ENCODE measurements at regions of chr21 and their contacts with region 1.

Region 1: GRCh38 chr21:38805328-38806152 is at the start of gene ETS2:
- DNase-seq: peak; percentile 90 to 91
- H3K4me3 ChIP-seq: peak within 1 kb of the TSS; percentile 84 to 98 (median 86)
- H3K27ac ChIP-seq: peak within 1 kb of the TSS; percentile 69 to 99 (median 97)
- H3K4me1 ChIP-seq: peaks cover 13 to 30% of the 10 kb centered on the region in 2 donors
- H3K27me3 ChIP-seq: no peaks in the 10 kb centered on the region
- CTCF ChIP-seq: no peak
- POLR2A ChIP-seq: peak; percentile 83 to 97
- total RNA-seq, gene ETS2: 36.6 to 92.2 (median 56.3) TPM

Region 2: GRCh38 chr21:38733973-38734546 is 71.5 kb before region 1 on chr21:
- intact Hi-C with region 1: loop called (anchors 5 kb)
- DNase-seq: peak; percentile 86 to 88
- H3K4me3 ChIP-seq: peak overlapping the region in 1 of 3 donors; percentile 0
- H3K27ac ChIP-seq: peak overlapping the region in 2 of 3 donors; percentile 24 to 44
- H3K4me1 ChIP-seq: peaks cover 0 to 7% of the 10 kb centered on the region in 2 donors
- H3K27me3 ChIP-seq: no peaks in the 10 kb centered on the region
- CTCF ChIP-seq: peak; percentile 84 to 97 (median 93)
- POLR2A ChIP-seq: no peak

Region 3: DNA sequence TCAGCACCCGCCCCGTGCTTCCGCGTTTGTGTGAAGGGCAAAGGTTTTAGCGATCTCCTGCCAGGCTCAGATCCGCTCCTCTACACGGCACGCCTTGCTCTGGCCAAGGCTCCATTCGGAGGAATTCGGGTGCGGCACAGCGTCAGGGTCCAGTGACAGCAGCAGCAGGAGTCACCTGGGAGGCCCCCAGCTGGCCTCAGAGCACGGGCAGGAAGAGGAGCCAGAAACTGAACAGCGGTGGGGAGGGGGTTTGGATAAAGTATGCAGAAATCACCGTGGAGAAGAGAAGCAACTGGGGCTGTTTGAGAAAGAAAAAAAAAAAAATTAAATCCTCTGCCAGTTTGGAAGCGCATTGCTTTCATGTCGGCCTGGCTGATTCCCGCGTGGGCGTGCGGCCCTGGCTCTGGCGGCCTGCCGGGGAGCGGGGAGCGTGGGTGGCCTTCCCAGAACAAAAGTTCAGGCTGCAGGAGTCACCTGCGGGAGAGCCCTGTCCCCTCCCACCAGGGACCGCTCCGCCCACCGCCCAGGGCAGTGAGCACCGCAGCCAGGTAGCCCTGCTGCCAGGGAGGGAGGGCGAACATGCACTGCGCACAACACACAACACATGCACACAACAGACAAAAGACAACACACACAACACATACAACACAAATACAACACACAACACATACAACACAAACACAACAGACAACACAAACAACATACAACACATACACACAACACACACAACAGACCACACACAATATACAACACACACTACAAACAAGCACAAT is 107.8 kb after region 1 on chr21:
- intact Hi-C with region 1: no loop called
- DNase-seq: peak; percentile 96
- H3K4me3 ChIP-seq: no peak overlapping the region
- H3K27ac ChIP-seq: peak overlapping the region; percentile 90 to 98 (median 94)
- H3K4me1 ChIP-seq: peaks cover 29 to 67% of the 10 kb centered on the region in 2 donors
- H3K27me3 ChIP-seq: no peaks in the 10 kb centered on the region
- CTCF ChIP-seq: no peak
- POLR2A ChIP-seq: peak in 1 of 2 donors; percentile 66

Region 4: GRCh38 chr21:38925923-38926322 is 120.4 kb after region 1 on chr21:
- intact Hi-C with region 1: loop called (anchors 10 kb)
- DNase-seq: no peak
- H3K4me3 ChIP-seq: no peak overlapping the region
- H3K27ac ChIP-seq: peak overlapping the region in 2 of 3 donors; percentile 6 to 7
- H3K4me1 ChIP-seq: peaks cover 0 to 27% of the 10 kb centered on the region in 2 donors
- H3K27me3 ChIP-seq: no peaks in the 10 kb centered on the region
- CTCF ChIP-seq: no peak
- POLR2A ChIP-seq: no peak

Region 5: DNA sequence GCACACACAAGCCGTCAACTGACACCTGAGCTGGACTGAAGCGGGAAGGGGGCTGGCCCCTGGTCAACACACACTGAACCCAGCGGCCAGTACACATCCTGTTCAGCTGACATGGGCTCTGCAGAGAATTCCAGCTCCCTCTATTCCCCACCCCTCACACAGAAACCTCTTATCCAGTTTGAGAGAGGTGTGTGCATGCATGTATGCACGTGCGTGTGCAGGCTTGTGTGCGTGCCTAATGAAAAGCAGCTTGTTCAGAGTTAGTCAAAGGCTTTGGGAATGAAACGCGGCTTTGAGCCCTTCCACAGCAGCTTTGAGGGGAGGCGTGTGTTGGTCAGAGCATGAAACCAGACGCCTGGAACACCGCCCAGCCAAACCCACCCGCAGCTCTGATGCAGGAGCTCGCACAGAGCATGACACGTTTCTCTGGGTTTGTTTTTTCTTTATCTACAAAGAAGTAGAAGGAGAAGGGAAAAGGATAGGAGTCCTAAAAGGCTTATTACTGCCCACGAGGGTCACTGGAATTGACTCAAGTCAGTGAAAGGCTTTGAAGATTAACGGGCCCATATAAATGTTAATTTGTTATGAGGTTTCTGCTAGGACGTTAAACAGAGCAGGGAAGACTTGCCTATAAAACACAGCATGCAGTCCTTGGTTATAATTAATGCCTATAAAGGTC is 184.3 kb after region 1 on chr21:
- intact Hi-C with region 1: loop called (anchors 10 kb)
- DNase-seq: peak; percentile 54 to 63
- H3K4me3 ChIP-seq: no peak overlapping the region
- H3K27ac ChIP-seq: peak overlapping the region; percentile 22 to 60 (median 35)
- H3K4me1 ChIP-seq: peaks cover 60 to 84% of the 10 kb centered on the region in 2 donors
- H3K27me3 ChIP-seq: no peaks in the 10 kb centered on the region
- CTCF ChIP-seq: no peak
- POLR2A ChIP-seq: no peak

Region 6: DNA sequence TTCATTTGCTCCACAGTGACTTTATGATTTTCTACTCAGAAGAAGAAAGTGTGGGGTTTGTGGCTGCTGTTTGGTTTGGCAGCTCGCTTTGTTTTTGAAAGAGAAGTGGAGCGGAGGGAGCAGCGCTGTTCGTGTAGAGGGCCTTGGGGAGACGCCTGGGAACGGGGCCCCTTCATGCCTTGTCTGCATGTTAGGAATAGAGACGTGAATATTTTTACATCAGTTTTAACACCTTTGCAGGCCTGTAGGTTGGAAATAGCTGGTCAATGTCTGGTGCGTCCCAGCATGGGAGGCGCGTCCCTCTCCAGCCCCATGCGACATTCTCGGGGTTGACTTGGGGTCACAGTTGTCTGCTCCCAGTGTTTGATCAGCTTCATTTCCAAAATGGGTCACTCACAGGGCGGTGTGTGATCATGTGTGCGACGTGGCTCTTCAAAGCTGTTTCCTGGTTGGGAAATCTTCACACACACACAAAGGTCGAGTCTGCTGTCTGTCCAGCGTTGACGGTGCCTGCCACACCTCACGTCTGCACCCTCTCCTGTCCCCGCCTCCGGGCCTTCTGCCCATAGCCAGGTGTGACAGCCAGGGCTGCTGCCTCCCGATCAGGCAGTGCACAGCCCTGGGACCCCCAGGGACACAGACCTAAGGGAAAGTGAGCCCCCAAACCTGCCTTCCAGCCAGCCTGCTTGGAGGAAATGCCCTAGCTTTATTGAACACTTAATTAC is 228.5 kb after region 1 on chr21:
- intact Hi-C with region 1: loop called (anchors 10 kb)
- DNase-seq: peak; percentile 93 to 95
- H3K4me3 ChIP-seq: no peak overlapping the region
- H3K27ac ChIP-seq: peak overlapping the region; percentile 87 to 95 (median 94)
- H3K4me1 ChIP-seq: peaks cover 31 to 39% of the 10 kb centered on the region in 2 donors
- H3K27me3 ChIP-seq: no peaks in the 10 kb centered on the region
- CTCF ChIP-seq: peak in 2 of 6 experiments; percentile 30 to 32
- POLR2A ChIP-seq: peak in 1 of 2 donors; percentile 40

Region 7: DNA sequence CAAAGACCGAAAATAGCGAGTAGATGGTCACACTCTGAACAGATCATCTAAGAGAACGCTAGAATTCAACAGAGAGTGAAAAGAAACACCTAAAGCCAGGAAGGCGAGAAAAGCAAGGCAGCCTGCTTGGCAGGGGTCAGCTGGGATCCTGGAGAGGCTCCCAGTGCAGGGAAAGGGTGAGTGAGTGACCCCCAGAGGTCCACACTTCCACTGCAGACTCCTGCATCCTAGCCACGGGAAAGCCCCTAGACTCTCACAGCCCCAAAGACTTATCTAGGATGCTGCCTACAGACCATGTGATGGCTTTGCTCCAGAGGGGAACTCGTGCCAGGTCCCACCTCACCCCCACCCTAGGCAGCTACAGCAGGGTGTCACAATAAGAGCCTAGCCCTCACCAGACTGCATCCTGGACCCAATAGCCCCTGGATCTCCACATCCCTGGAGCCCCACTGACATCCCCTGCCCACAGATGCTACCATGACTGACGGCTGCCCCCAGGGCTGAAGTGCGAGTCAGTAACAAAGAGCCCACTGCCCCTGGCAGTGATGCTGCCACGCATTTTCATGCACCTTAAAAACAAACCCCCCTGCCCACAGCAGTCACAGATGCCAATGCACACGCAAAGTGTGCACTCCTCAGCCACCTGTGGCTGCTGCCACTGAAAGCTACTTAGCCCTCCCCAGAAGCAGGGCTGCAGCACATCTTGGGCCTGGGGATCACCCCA is 315.5 kb after region 1 on chr21:
- intact Hi-C with region 1: loop called (anchors 5 kb)
- DNase-seq: no peak
- H3K4me3 ChIP-seq: no peak overlapping the region
- H3K27ac ChIP-seq: no peak overlapping the region
- H3K4me1 ChIP-seq: peaks cover 0 to 4% of the 10 kb centered on the region in 2 donors
- H3K27me3 ChIP-seq: no peaks in the 10 kb centered on the region
- CTCF ChIP-seq: no peak
- POLR2A ChIP-seq: no peak